ENCODE measurements at regions of chr4 and their contacts with region 1.

Region 1: GRCh38 chr4:8440492-8441341 is at the starts of genes ACOX3 and TRMT44:
- DNase-seq: peak; percentile 100
- H3K4me3 Mint-ChIP-seq: peak within 1 kb of the TSS; percentile 95
- H3K27ac Mint-ChIP-seq: peak within 1 kb of the TSS; percentile 99
- H3K4me1 Mint-ChIP-seq: peaks cover 62% of the 10 kb centered on the region
- H3K27me3 Mint-ChIP-seq: peaks cover 2% of the 10 kb centered on the region
- total RNA-seq, gene ACOX3: 20.5 and 23.0 TPM in 2 replicates
- total RNA-seq, gene TRMT44: 35.7 and 38.5 TPM in 2 replicates

Region 2: GRCh38 chr4:8158710-8159536 is 281.8 kb before region 1 on chr4 and contains the start of gene ABLIM2:
- intact Hi-C with region 1: loop called (anchors 2 kb)
- DNase-seq: peak; percentile 100
- H3K4me3 Mint-ChIP-seq: peak within 1 kb of the TSS; percentile 97
- H3K27ac Mint-ChIP-seq: peak within 1 kb of the TSS; percentile 82
- H3K4me1 Mint-ChIP-seq: peaks cover 9% of the 10 kb centered on the region
- H3K27me3 Mint-ChIP-seq: peaks cover 27% of the 10 kb centered on the region
- total RNA-seq, gene ABLIM2: 0.28 and 0.63 TPM in 2 replicates

Region 3: DNA sequence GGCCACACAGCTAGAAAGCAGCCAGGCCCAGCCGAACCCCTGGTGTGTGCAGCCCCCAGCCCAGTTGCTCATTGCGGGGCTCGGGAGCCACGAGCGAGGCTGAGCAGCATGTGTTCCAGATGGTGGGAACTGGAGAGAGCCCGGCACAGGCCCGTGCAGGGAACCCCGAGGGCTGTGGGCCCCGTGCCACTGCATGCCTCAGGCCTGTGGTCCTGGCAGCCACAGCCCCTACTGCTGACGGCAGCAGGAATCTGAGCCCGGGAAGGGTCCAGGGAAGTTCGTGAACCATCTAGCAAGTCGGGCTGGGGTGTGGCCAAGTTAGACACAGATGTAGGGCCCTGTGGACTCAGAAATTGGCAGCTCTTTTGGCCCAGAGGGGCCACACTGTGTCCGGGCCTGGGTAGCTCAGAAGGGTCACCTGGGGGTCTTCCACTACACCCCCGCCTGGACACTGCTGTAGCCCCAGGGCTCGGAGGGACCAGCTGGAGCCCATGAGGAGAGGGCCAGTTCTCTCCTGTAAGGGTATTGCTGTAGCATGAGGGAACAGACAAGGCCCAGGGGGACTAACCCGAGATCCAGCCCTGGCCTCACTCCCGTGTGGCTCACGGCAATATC is 159.1 kb before region 1 on chr4:
- intact Hi-C with region 1: no loop called
- DNase-seq: no peak
- H3K4me3 Mint-ChIP-seq: no peak overlapping the region
- H3K27ac Mint-ChIP-seq: no peak overlapping the region
- H3K4me1 Mint-ChIP-seq: no peaks in the 10 kb centered on the region
- H3K27me3 Mint-ChIP-seq: no peaks in the 10 kb centered on the region

Region 4: GRCh38 chr4:8428293-8429097 is 12.2 kb before region 1 on chr4:
- intact Hi-C with region 1: loop called (anchors 1 kb)
- DNase-seq: peak; percentile 99
- H3K4me3 Mint-ChIP-seq: peak overlapping the region; percentile 97
- H3K27ac Mint-ChIP-seq: peak overlapping the region; percentile 92
- H3K4me1 Mint-ChIP-seq: peaks cover 18% of the 10 kb centered on the region
- H3K27me3 Mint-ChIP-seq: no peaks in the 10 kb centered on the region